ENCODE measurements at regions of chr19 and their contacts with region 1.

Region 1: DNA sequence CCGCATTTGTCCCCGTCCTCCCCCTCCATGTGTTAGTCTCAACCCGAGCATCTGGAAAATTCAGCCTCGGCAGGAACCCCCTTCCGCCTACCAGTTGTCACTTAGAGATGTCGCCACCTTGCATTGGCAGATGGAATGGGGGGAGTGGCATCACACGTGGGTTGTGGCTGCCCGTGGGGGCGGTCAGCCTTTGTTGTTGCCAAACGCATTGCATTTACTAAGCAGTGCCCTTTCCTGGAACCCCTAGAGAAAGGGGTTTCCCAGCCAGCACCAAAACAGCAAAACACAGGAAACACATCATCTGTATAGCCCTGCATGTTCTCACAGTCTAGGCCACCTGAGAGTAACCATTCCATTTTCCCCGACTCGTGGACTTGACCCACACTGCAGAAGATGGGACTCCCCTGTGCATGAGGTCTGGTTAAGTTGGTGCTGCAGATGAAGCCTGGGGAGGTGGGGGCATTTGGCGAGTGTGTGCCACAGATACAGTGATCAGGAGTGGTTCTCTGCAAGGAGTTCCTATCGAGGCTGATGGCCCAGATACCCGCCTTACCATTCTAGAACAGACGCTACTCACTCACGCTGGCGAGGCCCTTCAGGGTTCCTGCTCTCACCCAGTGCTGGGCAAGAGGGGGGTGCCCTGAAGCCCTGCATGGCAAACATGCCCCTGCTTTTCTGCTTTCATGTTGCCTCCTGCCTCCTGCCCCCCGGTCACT is 38.3 kb downstream of the TMED1 start:
- DNase-seq: peak; percentile 96
- H3K4me3 Mint-ChIP-seq: peak overlapping the region; percentile 70
- H3K27ac Mint-ChIP-seq: peak overlapping the region; percentile 96
- H3K4me1 Mint-ChIP-seq: peaks cover 28% of the 10 kb centered on the region
- H3K27me3 Mint-ChIP-seq: no peaks in the 10 kb centered on the region

Region 2: GRCh38 chr19:10730923-10731322 is 66.8 kb before region 1 on chr19:
- CTCF ChIA-PET with region 1: interaction called, 3 read pairs
- intact Hi-C with region 1: loop called (anchors 5 kb)
- DNase-seq: no peak
- H3K4me3 Mint-ChIP-seq: peak overlapping the region; percentile 52
- H3K27ac Mint-ChIP-seq: peak overlapping the region; percentile 84
- H3K4me1 Mint-ChIP-seq: peaks cover 51% of the 10 kb centered on the region
- H3K27me3 Mint-ChIP-seq: no peaks in the 10 kb centered on the region

Region 3: DNA sequence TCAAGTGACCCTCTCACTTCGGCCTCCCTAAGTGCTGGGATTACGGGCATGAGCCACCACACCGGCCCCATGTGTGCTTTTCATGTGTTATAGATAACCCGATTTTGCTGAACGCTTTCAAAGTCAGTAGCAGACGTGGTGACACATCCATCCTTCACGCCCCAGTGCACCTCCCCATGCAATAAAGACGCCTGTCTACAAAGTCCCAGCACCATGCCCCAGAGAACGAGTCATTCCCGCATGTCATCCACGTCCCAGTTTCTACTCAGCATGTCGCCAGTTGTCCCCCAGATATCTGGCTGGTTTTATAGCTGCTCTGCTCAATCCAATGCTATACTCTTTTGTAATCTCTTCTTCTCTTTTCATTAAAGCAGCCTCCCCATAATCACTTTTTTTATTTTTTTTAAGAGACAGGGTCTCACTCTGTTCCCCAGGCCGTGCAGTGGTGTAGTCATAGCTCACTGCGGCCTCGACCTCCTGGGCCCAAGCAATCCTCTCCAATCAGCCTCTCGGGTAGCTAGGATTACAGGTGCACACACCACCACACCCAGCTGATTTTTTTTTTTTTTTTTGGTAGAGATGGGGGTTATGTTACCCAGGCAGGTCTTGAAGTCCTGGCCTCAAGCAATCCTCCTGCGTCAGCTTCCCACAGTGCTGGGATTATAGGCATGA is 37.3 kb before region 1 on chr19:
- CTCF ChIA-PET with region 1: no interaction called
- intact Hi-C with region 1: loop called (anchors 1 kb)
- DNase-seq: peak; percentile 65
- H3K4me3 Mint-ChIP-seq: peak overlapping the region; percentile 71
- H3K27ac Mint-ChIP-seq: peak overlapping the region; percentile 96
- H3K4me1 Mint-ChIP-seq: peaks cover 88% of the 10 kb centered on the region
- H3K27me3 Mint-ChIP-seq: no peaks in the 10 kb centered on the region

Region 4: DNA sequence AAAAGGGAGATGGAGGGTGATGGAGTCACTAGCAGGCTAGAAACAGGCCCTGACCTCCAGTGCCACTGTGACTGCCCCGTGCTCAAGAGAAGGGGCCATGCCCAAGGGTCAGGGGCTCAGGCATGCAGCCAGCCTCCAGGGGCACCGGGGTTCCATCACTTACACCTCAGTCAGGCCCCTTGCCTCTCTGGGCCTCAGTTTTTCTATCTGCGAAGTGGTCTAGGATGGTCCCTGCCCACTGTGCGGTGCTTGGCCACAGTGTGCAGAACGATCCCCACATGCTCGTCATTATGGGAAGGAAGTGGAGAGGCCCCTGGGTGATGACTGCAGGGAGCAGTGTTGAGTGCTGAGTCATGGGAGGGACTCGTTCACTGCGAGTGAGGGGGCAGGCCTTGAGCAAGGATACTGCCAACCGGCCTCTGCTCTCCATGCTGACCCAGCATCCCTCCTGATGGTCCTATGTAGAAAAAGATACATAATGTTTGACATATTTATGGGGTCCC is 15.3 kb after region 1 on chr19:
- CTCF ChIA-PET with region 1: no interaction called
- intact Hi-C with region 1: loop called (anchors 1 kb)
- DNase-seq: peak; percentile 55
- H3K4me3 Mint-ChIP-seq: no peak overlapping the region
- H3K27ac Mint-ChIP-seq: peak overlapping the region; percentile 86
- H3K4me1 Mint-ChIP-seq: peaks cover 20% of the 10 kb centered on the region
- H3K27me3 Mint-ChIP-seq: no peaks in the 10 kb centered on the region

Region 5: DNA sequence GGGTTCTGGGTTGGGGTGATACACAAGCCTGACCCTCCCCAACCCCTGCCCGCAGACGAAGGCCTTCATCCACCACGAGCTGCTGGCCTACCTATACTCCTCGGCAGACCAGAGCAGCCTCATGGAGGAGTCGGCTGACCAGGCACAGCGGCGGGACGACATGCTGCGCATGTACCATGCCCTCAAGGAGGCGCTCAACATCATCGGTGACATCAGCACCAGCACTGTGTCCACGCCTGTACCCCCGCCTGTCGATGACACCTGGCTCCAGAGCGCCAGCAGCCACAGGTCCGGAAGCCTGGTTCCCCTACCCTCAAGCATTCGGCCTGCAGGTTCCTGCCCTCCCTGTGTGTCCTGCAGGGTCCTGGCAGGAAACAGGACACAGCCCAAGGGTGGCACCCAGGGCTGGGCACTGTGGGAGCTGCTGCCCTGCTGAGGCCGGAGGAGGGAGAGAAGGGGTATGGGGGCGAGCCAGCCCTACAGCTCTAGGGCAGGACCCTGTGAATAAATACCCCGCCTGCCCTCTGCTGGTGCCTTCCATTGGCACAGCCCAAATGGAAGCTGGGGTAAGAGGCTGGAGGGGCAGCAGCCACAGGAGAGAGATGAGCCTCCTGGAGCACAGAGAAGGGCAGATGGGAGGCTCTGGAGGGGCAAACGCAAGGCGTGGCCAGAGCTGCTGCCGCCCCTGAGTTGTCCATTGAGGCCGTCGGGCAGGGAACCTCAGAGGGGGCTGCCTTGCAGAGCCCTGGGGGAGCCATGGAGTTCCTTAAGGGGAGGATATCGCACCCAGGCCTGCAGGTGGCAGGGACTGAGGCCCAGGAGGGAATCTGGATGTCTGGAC is 31.5 kb after region 1 on chr19:
- CTCF ChIA-PET with region 1: no interaction called
- intact Hi-C with region 1: no loop called
- DNase-seq: peak; percentile 44
- H3K4me3 Mint-ChIP-seq: no peak overlapping the region
- H3K27ac Mint-ChIP-seq: no peak overlapping the region
- H3K4me1 Mint-ChIP-seq: no peaks in the 10 kb centered on the region
- H3K27me3 Mint-ChIP-seq: no peaks in the 10 kb centered on the region

Region 6: GRCh38 chr19:10864538-10864899 is 66.8 kb after region 1 on chr19:
- CTCF ChIA-PET with region 1: interaction called, 5 read pairs
- intact Hi-C with region 1: loop called (anchors 2 kb)
- DNase-seq: peak; percentile 94
- H3K4me3 Mint-ChIP-seq: no peak overlapping the region
- H3K27ac Mint-ChIP-seq: no peak overlapping the region
- H3K4me1 Mint-ChIP-seq: peaks cover 15% of the 10 kb centered on the region
- H3K27me3 Mint-ChIP-seq: no peaks in the 10 kb centered on the region

Measured in activated naive CD4-positive, alpha-beta T cell treated with anti-CD3 and anti-CD28 coated beads for 36 hours (primary cell).